Posterior vena cava (tissue), 2 donors: ENCODE measurements at regions of chrX and their contacts with region 1.

Region 1: DNA sequence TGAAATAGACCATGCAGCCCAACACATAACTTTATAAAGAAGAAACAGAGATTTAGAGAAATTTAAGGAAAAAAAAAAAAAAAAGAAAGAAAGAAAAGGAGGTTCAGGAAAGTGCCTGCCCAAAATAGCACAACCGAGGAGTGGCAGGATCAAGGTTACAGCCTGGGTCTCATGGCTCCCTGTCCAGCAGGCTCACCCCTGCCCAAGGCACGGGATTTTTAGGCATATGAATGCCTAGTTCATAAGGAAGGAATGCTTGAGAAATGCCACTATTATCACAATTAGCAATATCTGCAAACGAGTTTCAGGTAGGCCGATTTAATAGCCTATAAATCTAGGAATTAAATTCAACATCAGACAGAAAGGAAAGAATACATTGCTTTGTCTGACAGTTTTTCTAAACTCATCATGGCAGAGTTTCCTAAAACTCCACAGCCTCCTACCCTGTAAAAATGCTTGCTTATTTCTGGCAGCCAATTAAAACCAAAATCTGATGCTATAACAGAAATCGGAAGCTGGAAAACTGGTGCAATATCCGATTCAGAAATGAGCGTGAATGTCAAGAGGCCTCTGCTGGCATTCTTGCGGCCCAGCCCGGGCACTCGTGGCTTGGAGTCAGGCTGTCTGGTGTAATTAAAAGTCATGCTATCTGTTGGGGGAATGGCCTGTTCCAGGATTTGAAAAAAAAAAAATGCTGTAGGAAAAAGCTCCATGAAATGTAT is 63.5 kb downstream of the GEMIN8 start:
- DNase-seq: no peak

Region 2: DNA sequence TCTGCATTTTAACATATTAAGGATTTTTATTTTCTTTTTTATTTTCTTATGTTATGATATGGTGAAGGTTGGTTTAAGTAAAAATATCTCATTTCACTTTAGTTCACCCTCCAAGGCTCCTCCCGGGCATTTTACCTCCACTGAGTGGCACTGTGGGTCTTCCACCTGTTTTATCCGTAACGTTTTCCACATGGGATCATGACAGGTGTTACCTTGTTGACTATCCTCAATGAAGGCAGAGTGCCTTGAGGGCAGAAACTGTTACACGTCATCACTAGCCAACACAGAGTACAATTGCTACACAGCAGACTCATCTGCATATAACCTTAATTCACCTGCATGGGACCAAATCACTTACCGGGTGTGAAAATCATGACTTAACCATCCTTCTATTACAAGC is 42.4 kb before region 1 on chrX:
- intact Hi-C with region 1: loop called in 1 of 2 experiments (anchors 1 kb)
- DNase-seq: no peak

Region 3: DNA sequence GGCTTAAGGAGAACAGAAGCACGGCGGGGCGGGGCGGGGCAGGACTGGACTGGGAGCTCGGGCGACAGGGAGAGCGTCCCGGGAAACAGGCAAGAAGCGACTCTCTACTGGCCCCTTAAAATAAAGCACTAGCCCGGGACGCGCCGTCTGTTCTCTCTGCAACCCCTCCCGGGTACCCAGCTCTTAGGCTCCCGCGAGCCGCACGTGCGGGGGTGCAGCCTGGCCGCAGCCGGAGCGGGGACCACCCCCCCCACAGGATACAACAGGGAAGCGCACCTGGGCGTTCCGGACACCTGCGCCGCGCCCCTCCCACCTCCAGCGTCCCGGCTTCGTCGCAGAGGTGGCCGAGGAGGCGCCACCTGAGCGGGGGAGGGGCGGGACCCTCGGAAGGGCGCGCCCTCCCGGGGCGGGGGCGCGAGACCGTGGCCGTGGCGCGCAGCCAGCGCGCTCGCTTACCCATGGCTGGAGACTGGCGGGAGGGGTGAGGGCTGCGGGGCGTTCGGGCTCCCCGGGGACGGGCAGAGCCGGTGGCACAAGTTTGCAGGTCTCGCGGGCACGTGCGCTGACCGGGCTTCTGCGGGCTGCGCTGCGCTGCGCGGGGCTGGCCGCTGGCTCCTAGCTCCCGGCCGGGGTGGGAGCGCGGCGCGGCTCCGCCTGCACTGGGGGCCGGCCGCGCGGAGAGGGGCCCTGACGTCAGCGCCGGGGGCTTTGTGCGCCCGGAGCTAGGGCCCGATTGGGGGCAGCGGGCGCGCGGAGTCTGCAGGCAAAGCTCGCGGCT is 28.0 kb before region 1 on chrX:
- intact Hi-C with region 1: no loop called
- DNase-seq: no peak

Region 4: GRCh38 chrX:14554131-14554715 is 588.0 kb after region 1 on chrX:
- intact Hi-C with region 1: no loop called
- DNase-seq: no peak